AG04449 (cell line): ENCODE measurements at regions of chr7 and their contacts with region 1.

Region 1: DNA sequence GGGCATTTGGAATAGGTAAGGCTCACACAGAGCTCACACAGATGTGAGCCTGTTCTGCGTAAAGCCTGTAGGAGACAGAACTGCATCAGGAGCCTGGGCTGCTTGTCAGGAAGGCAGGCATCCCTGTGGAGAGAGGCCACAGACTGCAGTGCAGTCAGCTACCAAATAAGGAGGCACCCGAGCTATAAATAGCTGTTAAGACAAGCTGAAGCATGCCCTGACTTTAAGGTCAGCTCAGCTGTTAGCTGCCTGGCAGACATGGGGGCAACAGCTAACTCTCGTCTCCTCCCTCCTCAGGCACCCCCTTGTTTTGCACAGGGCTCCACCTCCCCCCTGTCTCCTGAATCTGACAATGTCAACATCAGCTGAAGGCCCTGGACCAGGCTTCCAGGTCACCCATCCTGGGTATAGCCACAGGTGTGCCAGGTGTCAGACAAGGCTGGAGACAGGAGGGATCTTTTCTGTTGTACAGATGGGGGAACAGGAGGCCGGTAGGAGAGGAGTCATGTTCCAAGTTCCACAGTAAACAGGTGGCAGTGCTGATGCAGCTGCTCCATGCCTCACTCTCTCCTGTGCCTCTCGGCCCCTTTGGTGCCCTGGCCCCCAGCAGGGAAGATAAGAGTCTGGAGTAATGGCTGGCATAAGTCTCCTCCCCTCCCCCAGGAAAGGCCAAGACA is 27.6 kb upstream of the MKRN1 start:
- DNase-seq: peak; percentile 68
- H3K4me3 ChIP-seq: no peak overlapping the region
- CTCF ChIP-seq: peak; percentile 20

Region 2: DNA sequence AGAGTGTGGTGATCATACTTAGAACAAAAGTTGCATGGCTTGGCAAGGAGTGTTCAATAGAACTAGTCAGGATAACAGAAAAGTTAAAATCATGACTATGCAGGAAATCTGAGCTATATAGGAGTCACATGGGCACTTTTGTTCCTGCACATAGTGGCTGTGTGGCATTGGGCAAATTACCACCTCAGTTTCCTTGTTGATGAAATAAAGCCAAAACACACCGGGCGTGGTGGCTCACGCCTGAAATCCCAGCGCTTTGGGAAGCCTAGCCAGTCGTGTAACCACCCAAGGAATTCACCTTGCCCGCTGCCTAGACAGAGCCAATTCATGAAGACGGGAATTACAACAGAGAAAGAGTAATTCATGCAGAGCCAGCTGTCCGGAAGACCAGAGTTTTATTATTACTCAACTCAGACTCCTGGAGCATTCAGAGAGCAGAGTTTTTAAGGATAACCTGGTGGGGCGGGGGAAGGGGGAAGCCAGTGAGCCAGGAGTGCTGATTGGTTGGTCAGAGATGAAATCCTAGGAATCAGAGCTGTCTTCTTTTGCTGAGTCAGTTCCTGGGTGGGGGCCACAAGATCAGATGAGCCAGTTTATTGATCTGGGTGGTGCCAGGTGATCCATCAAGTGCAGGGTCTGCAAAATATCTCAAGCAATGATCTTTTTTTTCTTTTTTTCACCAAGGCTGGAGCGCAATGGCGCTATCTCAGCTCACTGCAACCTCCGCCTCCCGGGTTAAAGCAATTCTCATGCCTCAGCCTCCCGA is 21.2 kb before region 1 on chr7:
- CTCF ChIA-PET with region 1: interaction called, 14 read pairs
- POLR2A ChIA-PET with region 1: no interaction called
- DNase-seq: no peak
- H3K4me3 ChIP-seq: no peak overlapping the region
- CTCF ChIP-seq: no peak

Region 3: DNA sequence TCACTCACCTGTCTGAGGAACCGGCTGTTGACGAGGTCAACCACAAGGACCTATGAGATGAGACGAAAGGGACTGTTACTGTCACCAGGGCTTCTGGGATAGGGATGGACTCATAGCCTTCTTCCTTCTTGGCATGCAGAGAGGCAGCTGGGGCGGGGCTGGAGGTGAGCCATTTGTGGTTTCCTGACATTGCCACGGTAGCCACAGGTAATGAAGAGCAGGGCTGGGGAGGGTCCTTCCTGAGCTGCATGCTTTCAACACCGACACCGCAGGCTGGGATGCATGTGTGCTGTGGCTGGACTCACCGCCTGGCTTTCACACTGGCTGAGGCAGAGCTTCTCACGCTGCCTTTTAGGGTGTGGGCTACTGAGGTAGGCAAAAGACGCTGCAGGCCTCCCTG is 18.8 kb after region 1 on chr7:
- CTCF ChIA-PET with region 1: no interaction called
- POLR2A ChIA-PET with region 1: no interaction called
- DNase-seq: no peak
- H3K4me3 ChIP-seq: no peak overlapping the region
- CTCF ChIP-seq: no peak